ENCODE measurements at regions of chr2 and their contacts with region 1.

Region 1: DNA sequence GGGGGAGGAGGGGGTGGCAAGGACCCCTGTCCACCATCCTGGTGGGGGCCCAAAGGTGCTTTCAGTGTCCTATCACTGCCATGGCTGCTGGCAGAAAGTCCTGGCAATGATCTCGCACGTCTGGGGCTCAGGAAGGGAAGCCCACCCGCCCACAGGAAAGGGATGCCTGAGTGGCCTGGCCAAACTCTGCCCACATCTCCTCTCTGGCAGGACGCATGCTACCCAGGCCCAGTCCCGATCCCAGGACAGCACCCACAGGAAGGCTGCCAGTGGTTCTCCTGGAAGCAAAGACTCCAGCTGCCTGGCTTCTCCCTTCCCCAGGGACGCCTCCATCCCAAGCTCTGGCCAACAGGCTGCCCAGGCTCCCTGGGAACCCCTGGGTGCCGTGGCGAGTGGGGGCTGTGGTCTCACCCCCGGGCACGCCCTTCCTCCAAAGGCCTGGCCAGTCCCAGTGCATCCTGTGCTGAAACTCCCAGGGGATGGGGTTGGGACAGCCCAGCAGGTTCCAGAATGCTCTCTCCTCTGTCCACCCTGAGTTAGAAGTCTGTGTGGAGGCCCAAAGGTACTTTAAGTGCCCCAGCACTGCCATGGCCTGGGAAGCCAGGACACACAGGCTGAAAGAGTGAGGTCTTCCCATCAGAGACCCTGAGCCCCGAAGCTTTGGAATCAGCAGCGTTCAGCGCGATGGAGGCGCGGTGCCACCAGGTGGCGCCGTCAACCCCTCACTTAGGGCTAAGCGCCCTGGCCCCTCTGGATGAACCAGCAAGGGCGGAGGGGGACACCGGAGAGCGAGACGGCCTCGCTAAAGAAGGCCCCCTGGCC is 29.8 kb upstream of the TAF1B start:
- DNase-seq: peak; percentile 79
- H3K4me3 Mint-ChIP-seq: no peak overlapping the region
- H3K27ac Mint-ChIP-seq: no peak overlapping the region
- H3K4me1 Mint-ChIP-seq: peaks cover 35% of the 10 kb centered on the region
- H3K27me3 Mint-ChIP-seq: peaks cover 7% of the 10 kb centered on the region

Region 2: GRCh38 chr2:9757501-9758264 is 55.8 kb before region 1 on chr2:
- CTCF ChIA-PET with region 1: no interaction called
- POLR2A ChIA-PET with region 1: no interaction called
- DNase-seq: no peak
- H3K4me3 Mint-ChIP-seq: no peak overlapping the region
- H3K27ac Mint-ChIP-seq: no peak overlapping the region
- H3K4me1 Mint-ChIP-seq: peaks cover 69% of the 10 kb centered on the region
- H3K27me3 Mint-ChIP-seq: peaks cover 8% of the 10 kb centered on the region

Region 3: GRCh38 chr2:9770308-9771100 is 43.0 kb before region 1 on chr2:
- CTCF ChIA-PET with region 1: interaction called, 19 read pairs
- POLR2A ChIA-PET with region 1: no interaction called
- DNase-seq: peak; percentile 73
- H3K4me3 Mint-ChIP-seq: no peak overlapping the region
- H3K27ac Mint-ChIP-seq: no peak overlapping the region
- H3K4me1 Mint-ChIP-seq: peaks cover 21% of the 10 kb centered on the region
- H3K27me3 Mint-ChIP-seq: no peaks in the 10 kb centered on the region

Region 4: DNA sequence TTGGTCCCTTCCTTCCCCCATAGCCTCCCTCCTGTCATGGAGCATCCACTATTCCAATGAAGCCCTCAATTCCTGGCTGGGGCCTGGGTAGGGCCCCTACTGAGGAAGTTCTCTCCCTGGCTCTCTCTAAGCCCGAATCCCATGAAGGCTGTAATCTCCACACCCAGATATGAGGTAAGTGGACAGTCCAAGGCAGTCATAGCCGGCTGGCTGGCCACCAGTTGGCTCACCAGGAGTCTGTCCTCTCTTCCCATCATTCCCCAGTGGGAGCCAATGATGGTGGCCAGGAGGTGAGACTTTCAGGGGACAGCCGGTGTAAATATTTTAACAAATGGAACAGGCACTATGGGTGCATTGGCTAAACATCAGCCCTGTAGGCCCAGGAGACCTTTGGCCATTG is 23.0 kb after region 1 on chr2:
- CTCF ChIA-PET with region 1: interaction called, 44 read pairs
- POLR2A ChIA-PET with region 1: interaction called, 4 read pairs
- DNase-seq: no peak
- H3K4me3 Mint-ChIP-seq: no peak overlapping the region
- H3K27ac Mint-ChIP-seq: no peak overlapping the region
- H3K4me1 Mint-ChIP-seq: peaks cover 15% of the 10 kb centered on the region
- H3K27me3 Mint-ChIP-seq: peaks cover 13% of the 10 kb centered on the region

Region 5: GRCh38 chr2:9909106-9909505 is 95.6 kb after region 1 on chr2:
- CTCF ChIA-PET with region 1: interaction called, 26 read pairs
- POLR2A ChIA-PET with region 1: interaction called, 4 read pairs
- DNase-seq: no peak
- H3K4me3 Mint-ChIP-seq: no peak overlapping the region
- H3K27ac Mint-ChIP-seq: no peak overlapping the region
- H3K4me1 Mint-ChIP-seq: peaks cover 3% of the 10 kb centered on the region
- H3K27me3 Mint-ChIP-seq: no peaks in the 10 kb centered on the region

Region 6: GRCh38 chr2:9914384-9915065 is 101.0 kb after region 1 on chr2:
- CTCF ChIA-PET with region 1: interaction called, 26 read pairs
- POLR2A ChIA-PET with region 1: interaction called, 4 read pairs
- DNase-seq: peak; percentile 67
- H3K4me3 Mint-ChIP-seq: no peak overlapping the region
- H3K27ac Mint-ChIP-seq: no peak overlapping the region
- H3K4me1 Mint-ChIP-seq: peaks cover 12% of the 10 kb centered on the region
- H3K27me3 Mint-ChIP-seq: no peaks in the 10 kb centered on the region

Region 7: DNA sequence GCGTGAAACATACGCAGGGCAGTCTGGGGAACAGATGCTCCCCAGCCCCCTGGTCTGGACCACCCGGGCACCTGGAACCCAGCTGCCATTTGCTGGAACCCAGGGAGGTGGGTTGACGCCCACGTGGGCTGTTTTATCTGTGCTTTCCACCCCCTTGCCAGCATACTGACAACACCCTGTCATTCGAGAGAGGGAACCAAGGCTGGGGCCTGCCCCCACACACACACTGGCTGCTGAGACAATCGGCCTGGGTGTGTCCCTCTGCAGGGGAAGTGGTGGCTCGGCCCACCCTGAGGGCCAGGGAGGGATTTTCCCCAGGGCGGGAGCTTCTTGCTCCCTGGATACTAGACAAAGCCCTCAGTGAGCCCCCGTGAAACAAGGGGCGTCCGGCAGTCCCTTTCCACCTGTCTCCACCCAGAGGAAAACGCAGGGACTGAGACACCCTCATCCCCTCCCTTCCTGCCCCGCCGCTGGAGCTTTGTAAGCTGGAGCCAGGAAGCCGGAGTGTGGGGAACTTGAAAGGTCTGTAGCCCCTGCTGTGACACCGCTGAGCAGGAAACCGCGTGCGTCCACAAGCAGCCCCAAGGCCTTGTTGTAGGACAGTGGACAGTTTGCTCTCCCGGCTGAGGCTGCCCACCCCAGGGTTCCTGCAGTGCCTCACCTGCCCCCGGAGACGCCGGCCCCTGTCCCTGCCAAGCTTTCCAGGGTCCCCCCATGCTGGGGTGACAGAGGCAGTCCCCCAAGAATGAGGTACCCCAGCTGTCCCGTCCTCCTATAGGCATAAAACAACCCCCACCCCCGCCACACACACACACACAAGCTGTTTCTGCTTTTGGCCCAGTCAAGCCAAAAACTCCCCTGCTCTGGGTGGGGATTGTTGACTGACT is 215.7 kb after region 1 on chr2:
- CTCF ChIA-PET with region 1: interaction called, 15 read pairs
- POLR2A ChIA-PET with region 1: interaction called, 4 read pairs
- DNase-seq: peak; percentile 77
- H3K4me3 Mint-ChIP-seq: peak overlapping the region; percentile 65
- H3K27ac Mint-ChIP-seq: peak overlapping the region; percentile 79
- H3K4me1 Mint-ChIP-seq: peaks cover 38% of the 10 kb centered on the region
- H3K27me3 Mint-ChIP-seq: no peaks in the 10 kb centered on the region

Region 8: GRCh38 chr2:10043906-10044601 is 230.5 kb after region 1 on chr2:
- CTCF ChIA-PET with region 1: interaction called, 40 read pairs
- POLR2A ChIA-PET with region 1: interaction called, 3 read pairs
- DNase-seq: peak; percentile 95
- H3K4me3 Mint-ChIP-seq: peak overlapping the region; percentile 80
- H3K27ac Mint-ChIP-seq: peak overlapping the region; percentile 81
- H3K4me1 Mint-ChIP-seq: peaks cover 44% of the 10 kb centered on the region
- H3K27me3 Mint-ChIP-seq: peaks cover 26% of the 10 kb centered on the region

Measured in activated CD4-positive, alpha-beta memory T cell treated with anti-CD3 and anti-CD28 coated beads, Interleukin-2, amount 10 ng/mL, durations not matched to agents 7 days and 5 days (primary cell).